ENCODE measurements at regions of chr15 and their contacts with region 1.

Region 1: GRCh38 chr15:40108855-40109735 is at the start of gene BMF:
- DNase-seq: peak; percentile 89 to 98 (median 96)
- ATAC-seq: peak; percentile 87
- H3K4me3 ChIP-seq: peak within 1 kb of the TSS; percentile 72 to 90
- H3K4me3 Mint-ChIP-seq: peak within 1 kb of the TSS; percentile 92
- H3K27ac ChIP-seq: peak within 1 kb of the TSS; percentile 18 to 26
- H3K27ac Mint-ChIP-seq: peak within 1 kb of the TSS; percentile 60
- H3K4me1 ChIP-seq: peaks cover 30% of the 10 kb centered on the region
- H3K4me1 Mint-ChIP-seq: peaks cover 34% of the 10 kb centered on the region
- H3K27me3 ChIP-seq: no peaks in the 10 kb centered on the region
- H3K27me3 Mint-ChIP-seq: peaks cover 8% of the 10 kb centered on the region
- CTCF ChIP-seq: no peak
- total RNA-seq, gene BMF: 9.6 to 11.2 TPM

Region 2: GRCh38 chr15:39934397-39935071 is 174.6 kb before region 1 on chr15:
- CTCF ChIA-PET with region 1: no interaction called
- POLR2A ChIA-PET with region 1: no interaction called
- intact Hi-C with region 1: loop called in 1 of 2 experiments (anchors 10 kb)
- DNase-seq: peak in 1 of 9 experiments; percentile 30
- ATAC-seq: no peak
- H3K4me3 ChIP-seq: peak overlapping the region; percentile 79 to 82
- H3K4me3 Mint-ChIP-seq: peak overlapping the region; percentile 83
- H3K27ac ChIP-seq: peak overlapping the region in 1 of 2 experiments; percentile 47
- H3K27ac Mint-ChIP-seq: peak overlapping the region; percentile 5
- H3K4me1 ChIP-seq: peaks cover 7% of the 10 kb centered on the region
- H3K4me1 Mint-ChIP-seq: peaks cover 34% of the 10 kb centered on the region
- H3K27me3 ChIP-seq: no peaks in the 10 kb centered on the region
- H3K27me3 Mint-ChIP-seq: peaks cover 2% of the 10 kb centered on the region
- CTCF ChIP-seq: no peak

Region 3: GRCh38 chr15:40050788-40051470 is 58.2 kb before region 1 on chr15:
- CTCF ChIA-PET with region 1: interaction called, 192 read pairs
- POLR2A ChIA-PET with region 1: interaction called, 13 read pairs
- intact Hi-C with region 1: loop called in 1 of 2 experiments (anchors 1 kb)
- DNase-seq: peak in 3 of 9 experiments; percentile 36 to 46 (median 45)
- ATAC-seq: no peak
- H3K4me3 ChIP-seq: no peak overlapping the region
- H3K4me3 Mint-ChIP-seq: no peak overlapping the region
- H3K27ac ChIP-seq: peak overlapping the region in 1 of 2 experiments; percentile 32
- H3K27ac Mint-ChIP-seq: peak overlapping the region; percentile 1
- H3K4me1 ChIP-seq: peaks cover 65% of the 10 kb centered on the region
- H3K4me1 Mint-ChIP-seq: peaks cover 88% of the 10 kb centered on the region
- H3K27me3 ChIP-seq: no peaks in the 10 kb centered on the region
- H3K27me3 Mint-ChIP-seq: no peaks in the 10 kb centered on the region
- CTCF ChIP-seq: no peak

Region 4: GRCh38 chr15:40087991-40088928 is 20.8 kb before region 1 on chr15:
- CTCF ChIA-PET with region 1: interaction called, 54 read pairs
- POLR2A ChIA-PET with region 1: interaction called, 3 read pairs
- intact Hi-C with region 1: no loop called
- DNase-seq: no peak
- ATAC-seq: no peak
- H3K4me3 ChIP-seq: no peak overlapping the region
- H3K4me3 Mint-ChIP-seq: no peak overlapping the region
- H3K27ac ChIP-seq: no peak overlapping the region
- H3K27ac Mint-ChIP-seq: no peak overlapping the region
- H3K4me1 ChIP-seq: no peaks in the 10 kb centered on the region
- H3K4me1 Mint-ChIP-seq: peaks cover 4% of the 10 kb centered on the region
- H3K27me3 ChIP-seq: peaks cover 0 to under 1% of the 10 kb centered on the region in 2 experiments
- H3K27me3 Mint-ChIP-seq: peaks cover 19% of the 10 kb centered on the region
- CTCF ChIP-seq: no peak

Region 5: GRCh38 chr15:40160689-40161688 is 51.9 kb after region 1 on chr15 and contains the start of gene BUB1B:
- CTCF ChIA-PET with region 1: interaction called, 8 read pairs
- POLR2A ChIA-PET with region 1: no interaction called
- intact Hi-C with region 1: loop called (anchors 1 kb)
- DNase-seq: peak; percentile 82 to 96 (median 91)
- ATAC-seq: peak; percentile 98
- H3K4me3 ChIP-seq: peak within 1 kb of the TSS; percentile 61 to 71
- H3K4me3 Mint-ChIP-seq: no peak within 1 kb of the TSS
- H3K27ac ChIP-seq: no peak within 1 kb of the TSS
- H3K27ac Mint-ChIP-seq: no peak within 1 kb of the TSS
- H3K4me1 ChIP-seq: peaks cover 10% of the 10 kb centered on the region
- H3K4me1 Mint-ChIP-seq: no peaks in the 10 kb centered on the region
- H3K27me3 ChIP-seq: no peaks in the 10 kb centered on the region
- H3K27me3 Mint-ChIP-seq: no peaks in the 10 kb centered on the region
- CTCF ChIP-seq: no peak
- total RNA-seq, gene BUB1B: 0.47 to 1.2 TPM